GM12878 (cell line): ENCODE measurements at regions of chr15 and their contacts with region 1.

Region 1: DNA sequence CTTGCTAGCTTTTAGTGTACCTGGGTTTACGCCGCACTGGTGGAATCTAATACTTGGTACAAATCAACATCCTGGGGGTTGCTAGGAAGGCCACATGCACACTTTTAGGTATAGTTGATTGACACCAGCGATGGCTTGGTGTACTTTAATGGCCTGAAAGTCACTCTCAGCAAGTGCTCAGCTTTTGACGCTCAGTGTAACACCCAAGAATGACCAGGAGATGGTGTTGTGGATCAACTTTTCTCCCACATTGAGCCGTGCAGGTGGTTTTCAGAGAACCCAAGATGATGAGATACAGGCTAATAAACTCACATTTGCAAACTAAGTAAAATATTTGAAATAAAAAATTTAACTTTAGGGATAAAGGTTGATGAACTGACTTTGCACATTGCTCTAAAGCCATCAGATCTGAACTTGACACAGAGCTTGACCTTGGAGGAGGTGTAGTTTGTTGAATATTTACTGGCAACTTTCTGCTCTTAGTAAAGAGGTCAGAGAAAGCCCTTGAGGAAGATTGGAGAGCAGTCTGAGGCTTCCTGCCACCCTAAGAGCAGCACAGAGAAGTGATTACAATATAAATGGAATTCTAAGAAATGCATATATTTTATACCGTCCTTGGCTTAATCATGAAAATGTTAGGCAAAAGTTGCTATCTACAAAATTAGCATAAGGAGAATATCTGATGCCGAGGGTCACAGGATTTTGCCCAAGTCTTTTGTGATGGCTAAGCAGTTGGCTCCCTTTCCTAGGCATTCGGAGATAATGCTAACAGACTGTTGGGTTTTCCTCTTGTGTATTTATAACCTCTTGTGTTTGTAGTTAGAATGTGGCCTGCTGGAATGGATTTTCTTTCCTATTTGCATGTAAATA is 143.4 kb upstream of the RASGRP1 start:
- DNase-seq: no peak
- ATAC-seq: peak; percentile 98
- H3K4me3 ChIP-seq: no peak overlapping the region
- H3K27ac ChIP-seq: no peak overlapping the region
- H3K4me1 ChIP-seq: no peaks in the 10 kb centered on the region
- H3K27me3 ChIP-seq: no peaks in the 10 kb centered on the region
- CTCF ChIP-seq: peak; percentile 75 to 82 (median 76)
- EP300 ChIP-seq: no peak
- POLR2A ChIP-seq: no peak
- RAD21 ChIP-seq: peak; percentile 91

Region 2: GRCh38 chr15:38521316-38521715 is 186.7 kb before region 1 on chr15:
- CTCF ChIA-PET with region 1: no interaction called
- POLR2A ChIA-PET with region 1: no interaction called
- RAD21 ChIA-PET with region 1: no interaction called
- SMC1A ChIA-PET with region 1: no interaction called
- in situ Hi-C with region 1: no loop called
- intact Hi-C with region 1: no loop called
- DNase-seq: no peak
- ATAC-seq: no peak
- H3K4me3 ChIP-seq: no peak overlapping the region
- H3K27ac ChIP-seq: no peak overlapping the region
- H3K4me1 ChIP-seq: no peaks in the 10 kb centered on the region
- H3K27me3 ChIP-seq: no peaks in the 10 kb centered on the region
- CTCF ChIP-seq: no peak
- EP300 ChIP-seq: no peak
- POLR2A ChIP-seq: no peak
- RAD21 ChIP-seq: no peak

Region 3: GRCh38 chr15:38671675-38672254 is 36.3 kb before region 1 on chr15:
- CTCF ChIA-PET with region 1: no interaction called
- POLR2A ChIA-PET with region 1: no interaction called
- RAD21 ChIA-PET with region 1: no interaction called
- SMC1A ChIA-PET with region 1: no interaction called
- in situ Hi-C with region 1: no loop called
- intact Hi-C with region 1: no loop called
- DNase-seq: peak; percentile 91
- ATAC-seq: peak; percentile 76
- H3K4me3 ChIP-seq: no peak overlapping the region
- H3K27ac ChIP-seq: peak overlapping the region; percentile 77
- H3K4me1 ChIP-seq: peaks cover 56% of the 10 kb centered on the region
- H3K27me3 ChIP-seq: no peaks in the 10 kb centered on the region
- CTCF ChIP-seq: no peak
- EP300 ChIP-seq: peak in 1 of 2 experiments; percentile 7; a peak in 2 of 4 replicates
- POLR2A ChIP-seq: peak; percentile 61
- RAD21 ChIP-seq: no peak; the same call in 1 of the 2 replicates

Region 4: DNA sequence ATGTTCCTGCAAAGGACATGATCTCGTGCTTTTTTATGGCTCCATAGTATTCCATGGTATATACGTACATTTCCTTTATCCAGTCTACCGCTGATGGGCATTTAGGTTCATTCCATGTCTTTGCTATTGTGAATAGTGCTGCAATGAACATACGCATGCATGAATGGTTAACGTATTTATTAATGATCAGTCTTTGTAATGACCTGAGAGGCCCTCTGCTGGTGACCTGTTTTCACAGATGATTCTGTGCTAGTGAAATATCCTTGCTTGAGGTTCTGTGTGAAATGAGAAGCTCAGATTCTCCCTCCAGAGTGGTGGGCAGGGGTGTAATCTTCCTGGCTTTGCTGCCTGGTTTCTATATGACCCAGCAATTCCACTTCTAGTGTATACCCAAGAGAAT is 16.8 kb after region 1 on chr15:
- CTCF ChIA-PET with region 1: interaction called, 28 read pairs
- POLR2A ChIA-PET with region 1: no interaction called
- RAD21 ChIA-PET with region 1: no interaction called
- SMC1A ChIA-PET with region 1: interaction called, 3 read pairs
- in situ Hi-C with region 1: no loop called
- intact Hi-C with region 1: no loop called
- DNase-seq: no peak
- ATAC-seq: no peak
- H3K4me3 ChIP-seq: no peak overlapping the region
- H3K27ac ChIP-seq: no peak overlapping the region
- H3K4me1 ChIP-seq: no peaks in the 10 kb centered on the region
- H3K27me3 ChIP-seq: no peaks in the 10 kb centered on the region
- CTCF ChIP-seq: no peak
- EP300 ChIP-seq: no peak
- POLR2A ChIP-seq: no peak
- RAD21 ChIP-seq: no peak

Region 5: DNA sequence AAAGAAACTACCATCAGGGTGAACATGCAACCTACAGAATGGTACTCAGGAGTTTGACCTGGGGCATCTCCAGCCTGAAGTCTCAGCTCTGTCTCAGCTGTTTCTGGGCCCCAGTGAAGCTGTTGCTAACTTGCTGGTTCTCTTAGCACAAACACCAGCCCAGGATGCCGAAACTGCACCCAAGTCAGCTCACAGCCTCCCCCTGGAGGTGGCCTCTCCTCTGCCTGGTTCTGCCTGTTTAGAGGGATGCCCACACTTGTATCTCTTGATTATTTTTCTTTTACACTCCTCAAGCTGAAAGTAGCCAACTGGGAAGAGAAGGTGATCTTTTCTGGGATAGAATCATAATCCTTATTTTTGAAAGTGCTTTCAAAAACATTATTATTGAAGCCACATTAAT is 145.6 kb after region 1 on chr15:
- CTCF ChIA-PET with region 1: interaction called, 13 read pairs
- POLR2A ChIA-PET with region 1: no interaction called
- RAD21 ChIA-PET with region 1: interaction called, 5 read pairs
- SMC1A ChIA-PET with region 1: interaction called, 9 read pairs
- in situ Hi-C with region 1: no loop called
- intact Hi-C with region 1: loop called (anchors 10 kb)
- DNase-seq: no peak
- ATAC-seq: peak; percentile 80
- H3K4me3 ChIP-seq: no peak overlapping the region
- H3K27ac ChIP-seq: no peak overlapping the region
- H3K4me1 ChIP-seq: no peaks in the 10 kb centered on the region
- H3K27me3 ChIP-seq: no peaks in the 10 kb centered on the region
- CTCF ChIP-seq: peak; percentile 41 to 53 (median 49)
- EP300 ChIP-seq: no peak
- POLR2A ChIP-seq: no peak
- RAD21 ChIP-seq: peak; percentile 49